AG04449 (cell line): ENCODE measurements at regions of chr7 and their contacts with region 1.

Region 1: GRCh38 chr7:143214789-143215679 is 6.8 kb upstream of the TAS2R40 start:
- DNase-seq: peak; percentile 62
- H3K4me3 ChIP-seq: no peak overlapping the region
- CTCF ChIP-seq: peak; percentile 93

Region 2: GRCh38 chr7:142873281-142873787 is 341.7 kb before region 1 on chr7:
- CTCF ChIA-PET with region 1: interaction called, 10 read pairs
- POLR2A ChIA-PET with region 1: no interaction called
- DNase-seq: no peak
- H3K4me3 ChIP-seq: no peak overlapping the region
- CTCF ChIP-seq: peak; percentile 50

Region 3: GRCh38 chr7:142880876-142881505 is 334.0 kb before region 1 on chr7:
- CTCF ChIA-PET with region 1: interaction called, 11 read pairs
- POLR2A ChIA-PET with region 1: no interaction called
- DNase-seq: no peak
- H3K4me3 ChIP-seq: no peak overlapping the region
- CTCF ChIP-seq: peak; percentile 60

Region 4: GRCh38 chr7:142943706-142944268 is 271.2 kb before region 1 on chr7:
- CTCF ChIA-PET with region 1: no interaction called
- POLR2A ChIA-PET with region 1: no interaction called
- DNase-seq: no peak
- H3K4me3 ChIP-seq: no peak overlapping the region
- CTCF ChIP-seq: no peak

Region 5: GRCh38 chr7:143188994-143189393 is 26.0 kb before region 1 on chr7:
- CTCF ChIA-PET with region 1: interaction called, 11 read pairs
- POLR2A ChIA-PET with region 1: no interaction called
- DNase-seq: no peak
- H3K4me3 ChIP-seq: no peak overlapping the region
- CTCF ChIP-seq: no peak

Region 6: DNA sequence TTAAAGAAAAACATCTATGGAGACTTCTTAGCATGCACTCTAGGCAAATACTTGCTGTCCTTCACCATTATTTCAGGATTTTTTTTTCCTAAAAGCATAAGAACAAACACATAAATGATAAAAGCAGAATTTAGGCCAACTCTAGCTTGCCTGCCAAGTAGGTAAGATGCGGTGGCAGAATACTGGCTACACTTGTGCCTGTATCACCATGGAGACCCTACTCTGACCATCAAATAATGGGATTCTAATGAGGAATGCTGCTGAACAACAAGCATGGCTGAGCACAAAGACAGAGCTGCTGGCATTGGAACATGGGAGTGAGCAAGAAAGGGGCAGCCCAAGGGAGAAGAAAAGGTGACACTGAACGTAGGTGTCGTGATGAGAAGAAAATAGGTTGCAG is 11.6 kb before region 1 on chr7:
- CTCF ChIA-PET with region 1: interaction called, 24 read pairs
- POLR2A ChIA-PET with region 1: no interaction called
- DNase-seq: no peak
- H3K4me3 ChIP-seq: no peak overlapping the region
- CTCF ChIP-seq: no peak

Region 7: GRCh38 chr7:143229054-143229790 is 14.2 kb after region 1 on chr7:
- CTCF ChIA-PET with region 1: interaction called, 30 read pairs
- POLR2A ChIA-PET with region 1: no interaction called
- DNase-seq: no peak
- H3K4me3 ChIP-seq: no peak overlapping the region
- CTCF ChIP-seq: no peak

Region 8: DNA sequence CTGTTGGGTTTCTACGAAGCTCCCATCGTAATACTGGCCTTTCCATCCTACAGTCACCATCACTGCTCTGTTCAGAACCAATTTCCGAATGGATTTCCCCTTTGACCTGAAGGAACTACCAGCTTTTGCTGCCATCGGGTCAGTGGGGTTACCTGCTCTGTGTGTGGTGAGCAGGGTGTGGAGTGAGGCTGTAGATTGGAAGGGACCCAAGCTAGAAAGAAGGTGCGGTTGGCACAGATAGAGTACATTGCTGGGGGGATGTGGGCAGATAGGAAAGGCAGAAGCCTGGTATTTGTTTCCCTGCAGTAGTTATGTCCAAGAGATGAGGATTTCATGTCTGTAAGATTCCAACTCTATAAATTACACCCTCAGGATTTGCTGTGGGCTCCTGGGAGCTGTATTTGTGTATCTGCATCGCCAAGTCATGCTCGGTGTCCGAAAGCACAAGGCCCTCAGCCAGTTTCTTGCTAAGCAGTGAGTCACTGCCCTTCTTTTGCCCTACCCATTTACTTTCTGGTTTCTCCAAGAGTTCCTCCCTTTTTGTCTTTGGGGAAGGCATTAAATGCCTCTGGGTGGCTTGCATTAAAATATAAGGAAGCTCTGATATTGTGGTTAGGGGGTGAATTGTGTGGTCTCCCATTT is 116.3 kb after region 1 on chr7:
- CTCF ChIA-PET with region 1: no interaction called
- POLR2A ChIA-PET with region 1: no interaction called
- DNase-seq: peak; percentile 81
- H3K4me3 ChIP-seq: no peak overlapping the region
- CTCF ChIP-seq: no peak